Head of caudate nucleus (tissue), 42 donors: ENCODE measurements at regions of chr10 and their contacts with region 1.

Region 1: DNA sequence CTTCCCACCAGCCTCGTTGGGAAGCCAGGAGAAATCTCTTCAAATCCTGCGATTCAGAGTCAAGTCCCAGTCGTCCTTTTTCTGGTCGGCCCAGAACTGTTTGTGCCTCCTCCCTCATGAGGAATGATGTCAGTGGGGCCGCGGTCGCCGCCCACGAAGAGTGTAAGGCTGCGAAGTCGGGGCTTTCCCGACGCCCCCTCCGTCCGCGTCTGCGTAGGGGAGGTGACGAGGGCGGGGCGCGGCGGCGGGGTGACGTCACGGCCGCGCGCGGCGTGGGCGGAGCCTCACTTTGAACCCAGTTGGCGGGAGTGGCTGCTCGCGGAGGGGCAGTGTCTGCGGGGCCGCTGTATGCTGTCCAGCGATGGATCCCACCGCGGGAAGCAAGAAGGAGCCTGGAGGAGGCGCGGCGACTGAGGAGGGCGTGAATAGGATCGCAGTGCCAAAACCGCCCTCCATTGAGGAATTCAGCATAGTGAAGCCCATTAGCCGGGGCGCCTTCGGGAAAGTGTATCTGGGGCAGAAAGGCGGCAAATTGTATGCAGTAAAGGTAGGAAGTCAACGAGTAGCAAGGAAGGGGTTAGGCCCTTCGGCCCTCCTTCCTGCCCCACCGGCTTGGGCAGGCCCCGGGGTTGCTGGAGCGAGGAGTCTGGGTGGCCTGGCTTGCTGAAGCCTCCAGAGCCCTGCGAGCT is at the start of gene MASTL:
- DNase-seq: peak; percentile 82 to 97 (median 92)

Region 2: GRCh38 chr10:26839966-26840627 is 315.1 kb before region 1 on chr10:
- intact Hi-C with region 1: no loop called
- DNase-seq: no peak

Region 3: GRCh38 chr10:27099916-27100812 is 55.0 kb before region 1 on chr10 and contains the start of gene ANKRD26:
- intact Hi-C with region 1: loop called (anchors 2 kb)
- DNase-seq: peak; percentile 89 to 99 (median 96)

Region 4: DNA sequence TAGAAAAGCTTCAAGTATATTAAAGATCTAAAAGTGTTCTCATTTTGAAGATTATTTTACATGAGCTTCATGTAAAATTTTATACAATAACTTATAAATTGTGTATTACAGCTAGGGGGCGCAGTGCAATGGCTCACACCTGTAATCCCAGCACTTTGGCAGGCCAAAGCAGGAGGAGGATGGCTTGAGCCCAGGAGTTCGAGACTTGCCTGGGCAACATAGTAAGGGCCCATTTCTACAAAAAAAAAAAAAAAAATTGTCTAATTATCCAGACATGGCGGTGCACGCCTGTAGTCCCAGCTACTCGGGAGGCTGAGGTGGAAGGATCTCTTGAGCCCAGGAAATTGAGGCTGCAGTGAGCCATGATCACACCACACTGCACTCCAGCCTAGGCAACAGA is 68.8 kb after region 1 on chr10:
- intact Hi-C with region 1: no loop called
- DNase-seq: peak in 6 of 42 donors; percentile 7 to 49 (median 16)